Activated CD8-positive, alpha-beta T cell treated with anti-CD3 and anti-CD28 coated beads for 36 hours (primary cell): ENCODE measurements at regions of chr2 and their contacts with region 1.

Region 1: GRCh38 chr2:96145036-96145847 is at the start of gene DUSP2:
- DNase-seq: peak; percentile 96
- ATAC-seq: peak; percentile 47
- H3K4me3 Mint-ChIP-seq: peak within 1 kb of the TSS; percentile 98
- H3K27ac Mint-ChIP-seq: peak within 1 kb of the TSS; percentile 98
- H3K4me1 Mint-ChIP-seq: peaks cover 53% of the 10 kb centered on the region
- H3K27me3 Mint-ChIP-seq: no peaks in the 10 kb centered on the region
- CTCF ChIP-seq: no peak
- total RNA-seq, gene DUSP2: 311 to 313 TPM

Region 2: GRCh38 chr2:96091533-96092334 is 53.5 kb before region 1 on chr2:
- CTCF ChIA-PET with region 1: no interaction called
- POLR2A ChIA-PET with region 1: no interaction called
- intact Hi-C with region 1: no loop called
- DNase-seq: no peak
- ATAC-seq: no peak
- H3K4me3 Mint-ChIP-seq: no peak overlapping the region
- H3K27ac Mint-ChIP-seq: no peak overlapping the region
- H3K4me1 Mint-ChIP-seq: no peaks in the 10 kb centered on the region
- H3K27me3 Mint-ChIP-seq: peaks cover 3% of the 10 kb centered on the region
- CTCF ChIP-seq: no peak

Region 3: DNA sequence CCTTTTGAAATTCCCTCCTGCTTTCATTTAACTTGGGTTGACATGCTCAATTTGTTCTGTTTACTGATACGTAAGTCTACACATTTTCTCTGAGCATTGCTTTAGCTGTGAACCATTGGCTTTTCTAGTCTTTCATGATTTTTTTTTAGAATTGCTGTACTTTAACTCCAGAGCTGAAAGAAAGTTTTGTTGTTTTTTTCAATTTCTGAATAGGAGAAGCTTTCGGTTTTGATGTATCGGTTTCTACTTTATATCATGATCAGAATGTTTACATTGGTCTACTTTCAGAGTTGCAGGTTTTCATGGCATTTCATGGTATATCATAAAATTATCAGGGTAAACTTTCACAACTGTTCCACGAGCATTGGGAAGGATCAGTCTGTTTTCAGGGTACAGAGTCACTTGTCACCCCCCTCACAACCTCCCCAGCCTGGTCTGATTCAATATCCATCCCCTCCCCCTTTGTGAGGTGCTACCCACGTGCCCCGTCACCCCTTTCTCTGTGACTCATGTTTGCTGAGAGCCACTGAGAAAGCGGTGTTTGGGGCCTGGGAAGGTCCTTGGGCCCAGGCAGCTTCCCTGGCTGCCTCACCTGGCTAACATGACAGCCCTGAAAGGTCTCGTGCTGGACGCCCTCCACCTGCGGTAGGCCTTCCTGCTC is 14.0 kb before region 1 on chr2:
- CTCF ChIA-PET with region 1: interaction called, 16 read pairs
- POLR2A ChIA-PET with region 1: interaction called, 690 read pairs
- intact Hi-C with region 1: no loop called
- DNase-seq: peak; percentile 72
- ATAC-seq: peak; percentile 74
- H3K4me3 Mint-ChIP-seq: peak overlapping the region; percentile 28
- H3K27ac Mint-ChIP-seq: peak overlapping the region; percentile 90
- H3K4me1 Mint-ChIP-seq: peaks cover 23% of the 10 kb centered on the region
- H3K27me3 Mint-ChIP-seq: no peaks in the 10 kb centered on the region
- CTCF ChIP-seq: no peak

Region 4: GRCh38 chr2:96164459-96165184 is 19.4 kb after region 1 on chr2:
- CTCF ChIA-PET with region 1: interaction called, 540 read pairs
- POLR2A ChIA-PET with region 1: interaction called, 690 read pairs
- intact Hi-C with region 1: loop called (anchors 2 kb)
- DNase-seq: peak; percentile 92
- ATAC-seq: peak; percentile 76
- H3K4me3 Mint-ChIP-seq: peak overlapping the region; percentile 81
- H3K27ac Mint-ChIP-seq: peak overlapping the region; percentile 99
- H3K4me1 Mint-ChIP-seq: peaks cover 75% of the 10 kb centered on the region
- H3K27me3 Mint-ChIP-seq: no peaks in the 10 kb centered on the region
- CTCF ChIP-seq: no peak

Region 5: GRCh38 chr2:96208143-96209010 is 63.1 kb after region 1 on chr2 and contains the start of gene STARD7:
- CTCF ChIA-PET with region 1: interaction called, 3 read pairs
- POLR2A ChIA-PET with region 1: interaction called, 13 read pairs
- intact Hi-C with region 1: no loop called
- DNase-seq: peak; percentile 99
- ATAC-seq: peak; percentile 93
- H3K4me3 Mint-ChIP-seq: peak within 1 kb of the TSS; percentile 89
- H3K27ac Mint-ChIP-seq: peak within 1 kb of the TSS; percentile 91
- H3K4me1 Mint-ChIP-seq: peaks cover 45% of the 10 kb centered on the region
- H3K27me3 Mint-ChIP-seq: no peaks in the 10 kb centered on the region
- CTCF ChIP-seq: no peak
- total RNA-seq, gene STARD7: 145 to 149 TPM

Region 6: DNA sequence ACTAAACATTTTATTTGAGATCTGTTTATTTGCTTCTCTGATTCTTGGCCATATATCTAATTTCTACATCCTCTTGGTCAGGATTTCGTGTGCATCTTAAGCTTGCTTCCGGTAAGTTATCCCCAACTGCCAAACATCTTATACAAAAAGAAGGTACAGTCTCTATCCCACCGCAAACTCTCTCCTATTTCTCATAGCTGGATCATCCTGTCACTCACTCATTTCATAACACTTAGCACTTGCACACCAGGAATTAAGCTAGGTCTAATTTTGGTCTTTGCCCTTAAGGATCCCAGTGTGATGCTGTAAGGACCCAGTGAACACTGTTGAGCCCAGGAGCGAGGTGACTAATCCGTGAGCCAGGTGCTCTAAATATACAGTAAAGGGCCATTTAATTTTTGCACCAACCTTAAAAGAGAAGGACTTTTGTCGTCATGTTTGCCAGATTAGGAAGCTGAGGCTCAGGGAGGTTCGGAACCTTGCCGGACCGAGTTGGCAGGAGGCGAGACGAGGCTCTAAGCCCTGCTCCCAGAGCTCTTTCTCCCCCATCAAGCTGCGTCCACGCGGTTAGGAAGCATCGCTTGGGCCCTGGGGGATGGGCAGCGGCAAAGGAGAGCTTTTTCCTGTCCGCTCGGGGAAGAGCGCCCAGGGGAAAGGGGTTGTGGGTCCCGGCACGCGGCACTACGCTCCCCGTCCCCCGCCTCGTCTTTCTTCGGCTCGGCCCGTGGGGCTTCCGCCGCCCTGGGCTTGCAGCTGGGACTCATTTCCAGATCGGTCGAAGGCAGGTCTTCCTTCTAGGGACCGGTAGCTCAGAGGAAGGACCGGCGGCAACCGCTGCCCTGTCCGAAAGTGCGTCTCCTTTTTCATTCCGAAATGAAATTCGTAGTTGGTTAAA is 175.7 kb after region 1 on chr2:
- CTCF ChIA-PET with region 1: no interaction called
- POLR2A ChIA-PET with region 1: interaction called, 4 read pairs
- intact Hi-C with region 1: loop called (anchors 10 kb)
- DNase-seq: peak; percentile 53
- ATAC-seq: peak; percentile 13
- H3K4me3 Mint-ChIP-seq: peak overlapping the region; percentile 76
- H3K27ac Mint-ChIP-seq: peak overlapping the region; percentile 54
- H3K4me1 Mint-ChIP-seq: peaks cover 53% of the 10 kb centered on the region
- H3K27me3 Mint-ChIP-seq: no peaks in the 10 kb centered on the region
- CTCF ChIP-seq: no peak